Esophagus muscularis mucosa (tissue), 4 donors: ENCODE measurements at regions of chr5 and their contacts with region 1.

Region 1: DNA sequence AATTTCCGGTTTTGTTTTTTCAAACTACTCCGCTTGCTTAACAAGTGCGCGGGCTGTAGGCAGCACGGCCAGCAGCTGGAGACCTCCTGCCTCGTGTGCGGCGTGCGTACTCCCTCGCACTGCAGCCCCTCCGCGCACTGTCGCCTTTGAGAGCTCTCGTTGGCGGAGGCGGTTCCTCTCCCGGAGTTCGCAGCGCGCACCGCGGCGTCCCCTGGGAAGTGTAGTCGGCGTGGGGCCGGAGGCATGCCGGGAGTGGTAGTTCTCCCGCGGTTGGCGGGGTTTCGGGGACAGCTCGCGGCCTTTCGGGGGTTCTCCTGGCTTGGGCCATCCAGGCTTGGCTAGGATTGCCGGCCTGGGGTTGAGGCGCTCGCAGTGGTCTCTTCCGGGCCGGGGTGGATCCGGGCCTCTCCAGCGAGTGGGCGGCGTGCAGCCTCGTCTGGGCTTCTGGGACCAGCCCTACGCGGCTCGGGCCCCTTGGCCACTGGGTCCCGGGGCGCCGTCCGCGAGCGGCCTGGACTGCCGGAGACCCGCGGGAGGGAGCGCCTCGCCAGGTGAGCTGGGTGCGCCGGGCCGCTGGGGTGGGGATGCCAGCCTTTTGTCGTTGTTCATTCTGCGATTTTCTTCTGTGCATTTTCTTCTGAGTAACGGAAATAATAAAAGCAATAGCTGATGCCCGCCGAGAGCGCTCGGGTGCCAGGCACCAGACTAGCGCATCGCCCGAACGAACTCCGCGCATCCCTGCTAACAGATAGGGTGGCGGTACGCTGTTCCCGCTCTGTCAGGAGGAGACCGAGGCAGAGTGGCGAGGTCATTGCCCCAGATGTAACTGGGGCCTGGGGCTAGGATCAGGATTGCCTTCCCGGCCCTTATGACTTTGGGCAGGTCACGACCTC is at the start of gene ZNF354C:
- DNase-seq: peak; percentile 97
- H3K4me3 ChIP-seq: peak within 1 kb of the TSS; percentile 71 to 80 (median 76)
- H3K27ac ChIP-seq: peak within 1 kb of the TSS; percentile 75 to 85 (median 80)
- H3K4me1 ChIP-seq: peaks cover 4 to 16% (median 13%) of the 10 kb centered on the region in 4 donors
- H3K27me3 ChIP-seq: no peaks in the 10 kb centered on the region
- CTCF ChIP-seq: peak in 1 of 3 experiments; percentile 8
- EP300 ChIP-seq: no peak
- POLR2A ChIP-seq: no peak
- total RNA-seq, gene ZNF354C: 5.0 to 7.9 (median 6.3) TPM

Region 2: DNA sequence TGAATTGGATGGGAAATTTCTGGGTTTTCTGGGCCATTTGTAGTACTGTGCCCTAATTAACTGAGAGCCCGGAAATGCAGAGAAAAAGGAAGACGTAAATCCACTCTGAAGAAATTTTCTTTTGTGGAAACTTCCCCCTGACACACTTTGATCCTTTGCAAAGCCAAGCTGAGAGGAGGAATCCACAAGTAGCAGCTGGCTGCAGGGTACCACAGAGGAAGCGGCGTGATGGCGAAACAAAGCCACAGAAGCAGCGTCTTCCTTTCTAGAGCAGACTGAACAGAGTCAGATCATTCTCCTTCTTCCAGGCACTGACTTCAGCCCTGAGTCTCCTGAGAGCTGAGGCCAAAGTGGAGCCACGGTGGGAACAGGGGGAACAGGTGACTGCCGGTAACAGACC is 282.8 kb before region 1 on chr5:
- intact Hi-C with region 1: no loop called
- DNase-seq: no peak
- H3K4me3 ChIP-seq: no peak overlapping the region
- H3K27ac ChIP-seq: no peak overlapping the region
- H3K4me1 ChIP-seq: no peaks in the 10 kb centered on the region
- H3K27me3 ChIP-seq: peaks cover 0 to 20% (median 0%) of the 10 kb centered on the region in 4 donors
- CTCF ChIP-seq: no peak
- EP300 ChIP-seq: no peak
- POLR2A ChIP-seq: no peak

Region 3: GRCh38 chr5:178859625-178860531 is 200.5 kb before region 1 on chr5 and contains the start of gene ZNF354B:
- intact Hi-C with region 1: loop called (anchors 5 kb)
- DNase-seq: peak; percentile 95
- H3K4me3 ChIP-seq: peak within 1 kb of the TSS; percentile 69 to 96 (median 93)
- H3K27ac ChIP-seq: peak within 1 kb of the TSS; percentile 85 to 92 (median 88)
- H3K4me1 ChIP-seq: peaks cover 7 to 31% (median 24%) of the 10 kb centered on the region in 4 donors
- H3K27me3 ChIP-seq: no peaks in the 10 kb centered on the region
- CTCF ChIP-seq: peak; percentile 14 to 26 (median 16)
- EP300 ChIP-seq: no peak
- POLR2A ChIP-seq: peak; percentile 27
- total RNA-seq, gene ZNF354B: 9.8 to 18.8 (median 15.4) TPM

Region 4: GRCh38 chr5:179023528-179024430 is 36.6 kb before region 1 on chr5 and contains the start of gene ZNF879:
- intact Hi-C with region 1: loop called (anchors 2 kb)
- DNase-seq: peak; percentile 98
- H3K4me3 ChIP-seq: peak within 1 kb of the TSS; percentile 76 to 95 (median 78)
- H3K27ac ChIP-seq: peak within 1 kb of the TSS; percentile 85 to 93 (median 90)
- H3K4me1 ChIP-seq: peaks cover 11 to 19% (median 15%) of the 10 kb centered on the region in 4 donors
- H3K27me3 ChIP-seq: no peaks in the 10 kb centered on the region
- CTCF ChIP-seq: peak in 1 of 3 experiments; percentile 11
- EP300 ChIP-seq: no peak
- POLR2A ChIP-seq: no peak
- total RNA-seq, gene ZNF879: 4.3 to 6.4 (median 4.8) TPM